Activated CD4-positive, alpha-beta memory T cell treated with anti-CD3 and anti-CD28 coated beads for 36 hours (primary cell): ENCODE measurements at regions of chr7 and their contacts with region 1.

Region 1: GRCh38 chr7:48101968-48102367 is 12.9 kb downstream of the UPP1 start:
- DNase-seq: peak; percentile 47
- H3K4me3 Mint-ChIP-seq: no peak overlapping the region
- H3K27ac Mint-ChIP-seq: peak overlapping the region; percentile 70
- H3K4me1 Mint-ChIP-seq: peaks cover 37% of the 10 kb centered on the region
- H3K27me3 Mint-ChIP-seq: no peaks in the 10 kb centered on the region

Region 2: GRCh38 chr7:47979145-47979831 is 122.7 kb before region 1 on chr7 and contains the start of gene HUS1:
- CTCF ChIA-PET with region 1: no interaction called
- POLR2A ChIA-PET with region 1: interaction called, 4 read pairs
- intact Hi-C with region 1: loop called (anchors 1 kb)
- DNase-seq: peak; percentile 96
- H3K4me3 Mint-ChIP-seq: peak within 1 kb of the TSS; percentile 84
- H3K27ac Mint-ChIP-seq: peak within 1 kb of the TSS; percentile 91
- H3K4me1 Mint-ChIP-seq: peaks cover 24% of the 10 kb centered on the region
- H3K27me3 Mint-ChIP-seq: no peaks in the 10 kb centered on the region
- total RNA-seq, gene HUS1: 38.6 to 38.9 TPM

Region 3: GRCh38 chr7:48041653-48041970 is 60.4 kb before region 1 on chr7:
- CTCF ChIA-PET with region 1: interaction called, 3 read pairs
- POLR2A ChIA-PET with region 1: no interaction called
- intact Hi-C with region 1: loop called (anchors 1 kb)
- DNase-seq: no peak
- H3K4me3 Mint-ChIP-seq: no peak overlapping the region
- H3K27ac Mint-ChIP-seq: peak overlapping the region; percentile 73
- H3K4me1 Mint-ChIP-seq: peaks cover 42% of the 10 kb centered on the region
- H3K27me3 Mint-ChIP-seq: peaks cover 3% of the 10 kb centered on the region

Region 4: GRCh38 chr7:48192996-48193395 is 91.0 kb after region 1 on chr7:
- CTCF ChIA-PET with region 1: no interaction called
- POLR2A ChIA-PET with region 1: no interaction called
- intact Hi-C with region 1: no loop called
- DNase-seq: no peak
- H3K4me3 Mint-ChIP-seq: no peak overlapping the region
- H3K27ac Mint-ChIP-seq: no peak overlapping the region
- H3K4me1 Mint-ChIP-seq: no peaks in the 10 kb centered on the region
- H3K27me3 Mint-ChIP-seq: peaks cover 14% of the 10 kb centered on the region

Region 5: DNA sequence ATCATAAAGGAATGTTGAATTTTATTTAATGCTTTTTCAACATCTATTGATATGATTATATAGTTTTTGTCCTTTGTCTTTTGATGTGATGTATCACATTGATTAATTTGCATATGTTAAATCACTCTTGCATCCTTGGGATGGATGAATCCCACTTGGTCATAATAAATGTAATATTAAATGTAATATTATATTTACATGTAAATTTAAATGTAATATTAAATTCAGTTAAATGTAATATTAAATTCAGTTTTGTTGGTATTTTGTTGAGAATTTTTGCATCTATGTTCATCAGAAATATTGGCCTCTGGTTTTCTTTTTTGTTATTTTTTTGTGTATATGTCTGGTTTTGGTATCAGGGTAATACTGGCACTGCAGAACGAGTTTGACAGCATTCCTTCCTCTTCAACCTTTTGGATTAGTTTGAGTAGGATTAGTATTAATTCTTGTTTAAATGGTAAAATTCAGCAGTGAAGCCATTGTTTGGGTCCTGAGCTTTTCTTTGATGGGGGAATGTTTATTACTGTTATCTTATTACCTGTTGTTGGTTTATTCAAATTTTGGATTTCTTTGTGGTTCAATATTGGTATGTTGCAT is 107.1 kb after region 1 on chr7:
- CTCF ChIA-PET with region 1: no interaction called
- POLR2A ChIA-PET with region 1: no interaction called
- intact Hi-C with region 1: no loop called
- DNase-seq: no peak
- H3K4me3 Mint-ChIP-seq: no peak overlapping the region
- H3K27ac Mint-ChIP-seq: no peak overlapping the region
- H3K4me1 Mint-ChIP-seq: no peaks in the 10 kb centered on the region
- H3K27me3 Mint-ChIP-seq: peaks cover 7% of the 10 kb centered on the region